Left ventricle myocardium inferior (tissue), 1 donor: ENCODE measurements at regions of chr9 and their contacts with region 1.

Region 1: DNA sequence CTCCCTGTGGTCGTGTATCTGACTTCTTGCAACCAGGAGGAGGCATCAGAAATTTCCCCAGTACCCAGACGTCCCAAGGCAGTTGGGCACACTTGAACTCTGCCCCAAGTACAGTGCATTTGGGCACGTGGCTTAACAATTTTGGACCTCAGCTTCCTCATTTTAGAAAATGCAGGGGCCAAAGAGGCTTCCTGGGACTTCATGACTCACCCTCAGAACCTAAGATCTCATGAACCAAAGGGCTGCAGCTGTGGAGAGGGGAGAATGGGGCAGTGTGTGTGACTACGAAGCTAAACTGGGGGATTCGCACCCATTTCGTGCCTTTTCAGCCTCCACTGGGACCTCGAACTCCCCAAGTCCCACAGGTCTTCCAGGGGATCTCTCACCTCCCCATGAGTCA is 59.2 kb downstream of the SYK start:
- DNase-seq: no peak
- H3K4me3 ChIP-seq: no peak overlapping the region
- H3K27ac ChIP-seq: no peak overlapping the region
- H3K4me1 ChIP-seq: peaks cover 8% of the 10 kb centered on the region
- H3K27me3 ChIP-seq: no peaks in the 10 kb centered on the region
- CTCF ChIP-seq: no peak

Region 2: GRCh38 chr9:89597711-89598625 is 1262.9 kb before region 1 on chr9:
- intact Hi-C with region 1: loop called (anchors 10 kb)
- DNase-seq: no peak
- H3K4me3 ChIP-seq: no peak overlapping the region
- H3K27ac ChIP-seq: no peak overlapping the region
- H3K4me1 ChIP-seq: peaks cover 11% of the 10 kb centered on the region
- H3K27me3 ChIP-seq: peaks cover 9% of the 10 kb centered on the region
- CTCF ChIP-seq: peak; percentile 88

Region 3: GRCh38 chr9:90142580-90142979 is 718.2 kb before region 1 on chr9:
- intact Hi-C with region 1: loop called (anchors 10 kb)
- DNase-seq: no peak
- H3K4me3 ChIP-seq: no peak overlapping the region
- H3K27ac ChIP-seq: no peak overlapping the region
- H3K4me1 ChIP-seq: peaks cover 4% of the 10 kb centered on the region
- H3K27me3 ChIP-seq: peaks cover 7% of the 10 kb centered on the region
- CTCF ChIP-seq: peak; percentile 69